Activated CD8-positive, alpha-beta T cell treated with anti-CD3 and anti-CD28 coated beads, Interleukin-2, amount 10 ng/mL, durations not matched to agents 7 days and 5 days (primary cell): ENCODE measurements at regions of chr6 and their contacts with region 1.

Region 1: GRCh38 chr6:139364302-139364981 is 10.0 kb downstream of the CITED2 start:
- DNase-seq: no peak
- ATAC-seq: peak; percentile 35
- H3K4me3 Mint-ChIP-seq: no peak overlapping the region
- H3K27ac Mint-ChIP-seq: no peak overlapping the region
- H3K4me1 Mint-ChIP-seq: peaks cover 41% of the 10 kb centered on the region
- H3K27me3 Mint-ChIP-seq: no peaks in the 10 kb centered on the region

Region 2: DNA sequence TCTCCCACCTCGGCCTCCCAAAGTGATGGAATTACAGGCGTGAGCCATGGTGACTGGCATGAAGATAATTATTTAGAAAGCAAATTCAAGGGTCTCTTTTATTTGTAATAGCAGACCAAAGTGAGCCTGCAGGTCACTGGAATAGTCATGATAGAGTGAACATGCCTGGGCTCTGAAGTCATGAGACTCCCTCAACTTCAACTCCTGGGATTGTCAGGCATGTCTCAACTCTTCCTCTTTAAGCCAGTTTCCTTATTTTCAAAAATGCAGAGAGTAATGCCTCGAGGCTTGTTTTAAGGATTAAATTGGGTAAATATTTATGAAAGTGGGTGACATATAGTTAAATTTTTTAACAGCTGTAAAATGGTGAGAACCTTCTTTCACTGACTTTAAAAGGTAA is 252.3 kb before region 1 on chr6:
- CTCF ChIA-PET with region 1: interaction called, 11 read pairs
- POLR2A ChIA-PET with region 1: no interaction called
- DNase-seq: no peak
- ATAC-seq: no peak
- H3K4me3 Mint-ChIP-seq: no peak overlapping the region
- H3K27ac Mint-ChIP-seq: peak overlapping the region; percentile 13
- H3K4me1 Mint-ChIP-seq: peaks cover 58% of the 10 kb centered on the region
- H3K27me3 Mint-ChIP-seq: no peaks in the 10 kb centered on the region

Region 3: DNA sequence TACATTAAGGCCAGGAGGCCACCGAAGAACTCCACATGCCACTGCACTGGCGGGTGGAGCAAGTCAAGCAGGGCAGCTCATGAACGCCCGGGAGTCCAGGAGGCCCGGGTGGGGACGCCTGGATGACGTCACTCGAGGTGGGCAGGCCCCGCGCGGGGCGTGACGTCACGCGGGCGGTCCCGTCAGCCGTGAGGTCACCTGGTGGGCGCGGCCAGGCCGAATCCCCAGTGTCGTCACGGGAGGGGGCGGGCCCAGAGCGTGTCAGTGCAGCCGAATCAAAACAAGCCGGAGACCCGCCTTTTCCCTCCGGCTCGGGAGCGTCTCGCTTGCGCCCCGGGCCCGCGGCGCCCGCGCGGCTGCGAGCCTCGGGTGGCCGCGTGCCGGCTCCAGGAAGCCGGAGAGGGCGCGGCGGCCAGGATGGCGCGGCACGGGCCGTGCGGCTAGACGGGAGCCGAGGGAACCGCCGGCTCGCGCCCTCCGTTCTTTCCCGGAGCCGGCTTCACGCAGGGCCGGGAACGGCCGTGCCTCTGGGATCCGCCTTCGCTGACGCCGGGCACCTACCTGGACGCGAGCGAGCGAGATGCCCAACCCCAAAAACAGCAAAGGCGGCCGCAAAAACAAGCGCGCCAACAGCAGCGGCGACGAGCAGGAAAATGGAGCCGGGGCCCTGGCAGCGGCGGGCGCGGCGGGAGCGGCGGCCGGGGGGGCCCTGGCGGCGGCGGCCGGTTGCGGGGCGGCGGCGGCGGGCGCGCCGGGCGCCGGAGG is 229.4 kb before region 1 on chr6 and contains the start of gene HECA:
- CTCF ChIA-PET with region 1: interaction called, 12 read pairs
- POLR2A ChIA-PET with region 1: no interaction called
- DNase-seq: peak; percentile 98
- ATAC-seq: peak; percentile 71
- H3K4me3 Mint-ChIP-seq: peak within 1 kb of the TSS; percentile 90
- H3K27ac Mint-ChIP-seq: peak within 1 kb of the TSS; percentile 93
- H3K4me1 Mint-ChIP-seq: peaks cover 68% of the 10 kb centered on the region
- H3K27me3 Mint-ChIP-seq: no peaks in the 10 kb centered on the region
- total RNA-seq, gene HECA: 33.9 to 34.4 TPM

Region 4: DNA sequence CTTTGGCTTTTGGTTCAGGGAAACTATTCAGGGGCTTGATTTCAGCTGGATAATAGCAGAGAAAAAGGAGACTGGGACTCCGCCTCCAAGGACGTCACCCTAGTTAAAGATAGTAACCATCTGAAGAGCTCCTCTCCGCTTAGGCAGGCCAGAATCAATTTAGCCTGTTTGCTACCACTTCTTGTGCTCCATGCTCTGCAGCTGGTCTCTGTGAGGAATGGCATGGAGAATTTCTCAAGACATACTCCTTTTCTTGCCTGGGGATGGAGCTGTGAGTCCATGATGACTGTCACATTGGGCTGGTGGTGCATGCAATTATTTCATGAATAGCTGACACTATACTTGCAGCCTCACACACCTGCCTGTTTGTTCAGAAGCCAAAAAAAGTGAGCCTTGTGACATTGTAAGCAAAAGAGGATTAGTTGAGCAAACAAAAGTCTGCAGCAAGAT is 134.0 kb before region 1 on chr6:
- CTCF ChIA-PET with region 1: interaction called, 22 read pairs
- POLR2A ChIA-PET with region 1: no interaction called
- DNase-seq: no peak
- ATAC-seq: no peak
- H3K4me3 Mint-ChIP-seq: no peak overlapping the region
- H3K27ac Mint-ChIP-seq: no peak overlapping the region
- H3K4me1 Mint-ChIP-seq: no peaks in the 10 kb centered on the region
- H3K27me3 Mint-ChIP-seq: no peaks in the 10 kb centered on the region

Region 5: GRCh38 chr6:139291813-139292619 is 72.4 kb before region 1 on chr6 and contains the start of gene TXLNB:
- CTCF ChIA-PET with region 1: interaction called, 31 read pairs
- POLR2A ChIA-PET with region 1: interaction called, 6 read pairs
- DNase-seq: peak; percentile 89
- ATAC-seq: peak; percentile 94
- H3K4me3 Mint-ChIP-seq: peak within 1 kb of the TSS; percentile 68
- H3K27ac Mint-ChIP-seq: peak within 1 kb of the TSS; percentile 98
- H3K4me1 Mint-ChIP-seq: peaks cover 48% of the 10 kb centered on the region
- H3K27me3 Mint-ChIP-seq: no peaks in the 10 kb centered on the region
- total RNA-seq, gene TXLNB: 0.37 to 0.65 TPM

Region 6: GRCh38 chr6:139303185-139303584 is 61.3 kb before region 1 on chr6:
- CTCF ChIA-PET with region 1: no interaction called
- POLR2A ChIA-PET with region 1: no interaction called
- DNase-seq: no peak
- ATAC-seq: no peak
- H3K4me3 Mint-ChIP-seq: no peak overlapping the region
- H3K27ac Mint-ChIP-seq: no peak overlapping the region
- H3K4me1 Mint-ChIP-seq: no peaks in the 10 kb centered on the region
- H3K27me3 Mint-ChIP-seq: peaks cover 6% of the 10 kb centered on the region

Region 7: GRCh38 chr6:139313784-139314545 is 50.5 kb before region 1 on chr6:
- CTCF ChIA-PET with region 1: no interaction called
- POLR2A ChIA-PET with region 1: no interaction called
- DNase-seq: no peak
- ATAC-seq: no peak
- H3K4me3 Mint-ChIP-seq: no peak overlapping the region
- H3K27ac Mint-ChIP-seq: no peak overlapping the region
- H3K4me1 Mint-ChIP-seq: peaks cover 9% of the 10 kb centered on the region
- H3K27me3 Mint-ChIP-seq: no peaks in the 10 kb centered on the region